ENCODE measurements at regions of chr6 and their contacts with region 1.

Region 1: GRCh38 chr6:124622351-124622750 is 339.9 kb upstream of the RNF217 start:
- DNase-seq: no peak
- H3K4me3 Mint-ChIP-seq: no peak overlapping the region
- H3K27ac Mint-ChIP-seq: no peak overlapping the region
- H3K4me1 Mint-ChIP-seq: no peaks in the 10 kb centered on the region
- H3K27me3 Mint-ChIP-seq: no peaks in the 10 kb centered on the region

Region 2: DNA sequence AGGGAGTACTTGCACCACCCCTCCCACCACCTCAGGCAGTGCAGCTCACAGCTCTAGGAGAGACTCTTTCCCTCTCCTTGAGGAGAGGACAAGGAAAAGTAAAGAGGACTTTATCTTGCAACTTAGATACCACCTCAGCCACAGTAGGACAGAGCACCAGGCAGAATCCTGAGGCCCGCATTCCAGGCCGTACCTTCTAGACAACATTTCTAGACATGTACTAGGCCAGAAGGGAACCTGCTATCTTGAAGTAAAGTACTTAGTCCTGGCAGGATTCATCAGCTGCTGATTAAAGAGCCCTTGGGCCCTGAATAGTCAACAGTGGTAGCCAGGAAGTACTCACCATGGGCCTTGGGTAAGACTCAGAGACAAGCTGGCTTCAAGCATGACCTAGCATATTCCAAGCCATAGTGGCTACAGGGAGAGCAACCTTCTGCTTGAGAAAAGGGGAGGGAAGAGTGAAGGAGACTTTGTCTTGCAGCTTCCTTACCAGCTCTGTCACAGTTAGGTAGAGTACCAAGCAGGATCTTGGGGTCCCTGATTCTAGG is 44.5 kb before region 1 on chr6:
- CTCF ChIA-PET with region 1: no interaction called
- POLR2A ChIA-PET with region 1: no interaction called
- intact Hi-C with region 1: loop called (anchors 1 kb)
- DNase-seq: no peak
- H3K4me3 Mint-ChIP-seq: no peak overlapping the region
- H3K27ac Mint-ChIP-seq: no peak overlapping the region
- H3K4me1 Mint-ChIP-seq: no peaks in the 10 kb centered on the region
- H3K27me3 Mint-ChIP-seq: no peaks in the 10 kb centered on the region

Region 3: DNA sequence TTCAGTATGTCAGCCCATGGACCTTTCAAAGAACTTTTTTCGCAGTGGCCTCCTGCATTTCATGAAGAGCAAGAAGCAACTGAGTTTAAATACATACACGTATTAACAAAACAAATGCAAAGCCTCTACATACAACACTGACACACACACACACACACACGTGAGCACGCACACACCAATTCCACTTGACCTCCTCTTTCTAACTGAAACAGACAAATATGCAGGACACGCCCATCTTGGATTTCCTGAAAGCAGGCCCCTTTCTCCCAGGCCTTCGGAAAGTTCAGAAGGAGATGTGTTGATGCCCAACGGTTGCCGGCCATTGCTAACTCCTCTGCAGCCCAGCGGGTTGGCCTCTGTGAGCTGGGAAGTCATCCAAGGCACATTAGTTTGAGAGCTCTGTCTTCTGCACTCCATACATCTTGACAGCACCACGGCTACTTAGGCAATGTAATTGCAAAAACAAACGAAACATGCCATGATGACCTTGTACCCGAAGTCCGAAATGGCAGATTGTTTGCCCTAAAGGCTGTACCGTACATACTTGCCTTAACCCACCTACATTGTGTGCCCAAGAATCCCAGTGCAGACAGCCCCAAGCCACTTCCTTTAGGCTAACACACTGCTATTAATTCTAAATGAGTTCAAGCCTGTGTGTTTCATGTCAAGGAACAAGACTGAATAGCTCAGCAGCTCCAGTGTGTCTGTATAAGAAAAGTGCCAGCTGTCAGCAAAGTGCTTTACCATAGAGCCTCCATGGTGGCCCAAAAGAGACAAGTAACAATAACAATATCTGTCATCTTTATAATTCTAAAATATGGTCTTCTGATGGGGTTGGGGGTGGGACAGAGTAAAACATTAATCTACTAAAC is 201.1 kb after region 1 on chr6:
- CTCF ChIA-PET with region 1: no interaction called
- POLR2A ChIA-PET with region 1: no interaction called
- intact Hi-C with region 1: no loop called
- DNase-seq: no peak
- H3K4me3 Mint-ChIP-seq: no peak overlapping the region
- H3K27ac Mint-ChIP-seq: no peak overlapping the region
- H3K4me1 Mint-ChIP-seq: no peaks in the 10 kb centered on the region
- H3K27me3 Mint-ChIP-seq: no peaks in the 10 kb centered on the region